AG04450 (cell line): ENCODE measurements at regions of chr20 and their contacts with region 1.

Region 1: DNA sequence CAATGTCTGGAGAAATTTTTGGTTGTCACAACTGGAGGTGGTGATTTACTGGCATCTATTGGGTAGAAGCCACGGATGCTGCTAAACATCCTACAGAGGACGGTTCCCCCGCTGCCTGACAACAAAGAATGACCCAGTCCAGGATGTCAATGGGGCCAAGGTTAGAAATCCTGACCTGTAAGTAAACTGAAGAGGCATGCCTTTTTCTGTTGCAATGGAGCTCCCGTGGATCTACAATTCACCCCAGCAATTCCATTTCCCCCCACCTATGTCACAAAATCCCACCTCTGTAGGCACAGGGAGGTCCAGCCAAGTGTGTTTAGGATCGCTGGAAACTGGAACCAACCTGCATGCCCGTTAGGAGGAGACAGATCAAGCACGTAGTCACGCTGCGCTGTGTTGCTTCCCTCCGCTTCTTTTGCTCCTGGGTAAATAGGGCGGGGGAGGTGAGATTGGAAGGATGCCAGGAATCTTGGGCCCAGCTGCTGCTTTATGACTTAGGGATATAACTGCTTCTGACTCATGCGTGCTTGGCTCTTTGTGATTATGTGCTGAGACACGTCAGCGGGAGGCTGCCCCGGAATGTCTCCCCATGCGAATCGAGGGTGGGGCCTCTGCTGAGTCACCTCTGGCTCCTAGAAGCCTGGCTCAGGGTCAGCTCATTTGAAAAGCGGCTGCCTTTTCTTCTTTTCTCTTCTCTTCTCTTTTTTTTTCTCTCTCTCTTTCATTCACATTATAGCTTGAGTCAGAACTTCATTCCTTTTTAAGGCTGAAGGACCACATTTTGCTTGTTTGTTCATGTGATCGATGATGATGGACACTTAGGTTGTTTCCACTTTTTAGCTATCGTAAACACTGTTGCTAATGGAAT is 12.4 kb upstream of the PEDS1 start:
- DNase-seq: peak; percentile 100
- H3K4me3 ChIP-seq: peak overlapping the region; percentile 66
- H3K27ac ChIP-seq: peak overlapping the region; percentile 98
- H3K27me3 ChIP-seq: no peaks in the 10 kb centered on the region
- CTCF ChIP-seq: 0 out of 2 replicates have a peak, but pooled peaks have one; percentile 14

Region 2: DNA sequence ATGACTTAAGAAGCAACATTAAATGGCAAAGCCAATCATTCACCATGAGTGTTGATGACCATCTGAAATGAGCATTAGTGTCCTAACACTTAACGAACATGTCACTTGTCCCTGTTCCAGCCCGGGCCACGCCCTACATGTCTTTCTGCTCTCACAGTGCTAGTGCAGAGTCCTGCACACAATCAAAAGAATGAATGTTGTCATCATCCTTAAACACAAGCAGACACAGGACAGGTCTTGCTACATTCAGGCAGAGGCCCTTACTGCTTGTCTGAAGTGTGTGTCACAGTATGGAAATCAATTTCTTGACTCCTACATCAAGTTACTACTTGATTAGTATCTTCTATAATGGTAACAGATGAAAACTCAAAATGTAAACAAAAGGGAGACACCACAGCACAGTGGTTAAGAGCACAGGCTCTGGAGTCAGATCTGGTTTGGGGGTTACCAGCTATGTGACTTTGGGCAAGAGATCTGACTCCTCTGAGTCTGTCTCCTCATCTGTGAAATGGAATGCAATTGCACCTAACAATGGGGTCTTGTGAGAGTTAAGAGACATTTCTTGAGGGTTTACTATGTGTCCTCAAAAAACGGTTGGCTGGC is 70.3 kb before region 1 on chr20:
- CTCF ChIA-PET with region 1: interaction called, 13 read pairs
- POLR2A ChIA-PET with region 1: interaction called, 8 read pairs
- DNase-seq: no peak
- H3K4me3 ChIP-seq: no peak overlapping the region
- H3K27ac ChIP-seq: no peak overlapping the region
- H3K27me3 ChIP-seq: no peaks in the 10 kb centered on the region
- CTCF ChIP-seq: no peak

Region 3: GRCh38 chr20:50120897-50121693 is 44.8 kb before region 1 on chr20:
- CTCF ChIA-PET with region 1: interaction called, 63 read pairs
- POLR2A ChIA-PET with region 1: interaction called, 9 read pairs
- DNase-seq: peak; percentile 36
- H3K4me3 ChIP-seq: no peak overlapping the region
- H3K27ac ChIP-seq: no peak overlapping the region
- H3K27me3 ChIP-seq: no peaks in the 10 kb centered on the region
- CTCF ChIP-seq: peak; percentile 84

Region 4: GRCh38 chr20:50153485-50154377 is 12.2 kb before region 1 on chr20 and contains the start of gene PEDS1:
- CTCF ChIA-PET with region 1: interaction called, 5 read pairs
- POLR2A ChIA-PET with region 1: interaction called, 24 read pairs
- DNase-seq: peak; percentile 80
- H3K4me3 ChIP-seq: peak within 1 kb of the TSS; percentile 88
- H3K27ac ChIP-seq: peak within 1 kb of the TSS; percentile 65
- H3K27me3 ChIP-seq: no peaks in the 10 kb centered on the region
- CTCF ChIP-seq: no peak
- polyA plus RNA-seq, gene PEDS1: 24.7 and 34.1 TPM in 2 replicates